OCI-LY7 (cell line): ENCODE measurements at regions of chr11 and their contacts with region 1.

Region 1: DNA sequence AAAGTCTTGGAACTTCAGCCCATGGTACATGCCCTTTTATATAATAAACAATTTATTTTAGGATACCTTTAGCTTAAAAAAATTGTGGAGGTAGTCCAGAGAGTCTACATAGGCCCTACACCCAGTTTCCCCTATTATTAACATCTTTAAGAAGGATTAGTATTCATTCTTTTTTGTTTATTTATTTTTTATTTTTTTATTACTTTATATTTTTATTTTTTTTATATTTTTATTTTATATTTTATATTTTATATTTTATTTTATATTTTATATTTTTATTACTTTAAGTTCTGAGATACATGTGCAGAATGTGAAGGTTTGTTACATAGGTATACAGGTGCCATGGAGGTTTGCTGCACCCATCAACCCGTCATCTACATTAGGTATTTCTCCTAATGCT is 15.9 kb upstream of the ABTB2 start:
- DNase-seq: no peak
- H3K4me3 ChIP-seq: no peak overlapping the region
- H3K27ac ChIP-seq: no peak overlapping the region
- H3K4me1 ChIP-seq: no peaks in the 10 kb centered on the region
- CTCF ChIP-seq: no peak

Region 2: GRCh38 chr11:34051349-34052035 is 322.2 kb before region 1 on chr11 and contains the start of gene CAPRIN1:
- CTCF ChIA-PET with region 1: no interaction called
- POLR2A ChIA-PET with region 1: no interaction called
- intact Hi-C with region 1: no loop called
- DNase-seq: peak; percentile 93
- H3K4me3 ChIP-seq: peak within 1 kb of the TSS; percentile 90
- H3K27ac ChIP-seq: peak within 1 kb of the TSS; percentile 90
- H3K4me1 ChIP-seq: peaks cover 42% of the 10 kb centered on the region
- CTCF ChIP-seq: no peak
- total RNA-seq, gene CAPRIN1: 259 and 260 TPM in 2 replicates

Region 3: GRCh38 chr11:34395916-34396550 is 22.3 kb after region 1 on chr11:
- CTCF ChIA-PET with region 1: no interaction called
- POLR2A ChIA-PET with region 1: no interaction called
- intact Hi-C with region 1: loop called (anchors 2 kb)
- DNase-seq: no peak
- H3K4me3 ChIP-seq: no peak overlapping the region
- H3K27ac ChIP-seq: no peak overlapping the region
- H3K4me1 ChIP-seq: no peaks in the 10 kb centered on the region
- CTCF ChIP-seq: no peak

Region 4: GRCh38 chr11:35683728-35684339 is 1310.1 kb after region 1 on chr11:
- CTCF ChIA-PET with region 1: no interaction called
- POLR2A ChIA-PET with region 1: no interaction called
- intact Hi-C with region 1: no loop called
- DNase-seq: peak; percentile 16
- H3K4me3 ChIP-seq: no peak overlapping the region
- H3K27ac ChIP-seq: peak overlapping the region; percentile 21
- H3K4me1 ChIP-seq: peaks cover 49% of the 10 kb centered on the region
- CTCF ChIP-seq: no peak